GM10248 (cell line): ENCODE measurements at regions of chr3 and their contacts with region 1.

Region 1: GRCh38 chr3:150775091-150775501 is 12.1 kb upstream of the SIAH2 start:
- DNase-seq: no peak
- CTCF ChIP-seq: no peak

Region 2: GRCh38 chr3:150787741-150788370 is 12.8 kb after region 1 on chr3:
- CTCF ChIA-PET with region 1: interaction called, 28 read pairs
- POLR2A ChIA-PET with region 1: no interaction called
- DNase-seq: peak; percentile 60
- CTCF ChIP-seq: peak; percentile 97

Region 3: GRCh38 chr3:150811984-150812383 is 36.9 kb after region 1 on chr3:
- CTCF ChIA-PET with region 1: no interaction called
- POLR2A ChIA-PET with region 1: no interaction called
- DNase-seq: no peak
- CTCF ChIP-seq: no peak